ENCODE measurements at regions of chr12 and their contacts with region 1.

Region 1: GRCh38 chr12:85448548-85449139 is 168.6 kb downstream of the ALX1 start:
- DNase-seq: no peak
- H3K4me3 ChIP-seq: no peak overlapping the region
- H3K27ac ChIP-seq: no peak overlapping the region
- H3K27me3 ChIP-seq: peaks cover 0 to 10% (median 0%) of the 10 kb centered on the region in 45 donors
- CTCF ChIP-seq: peak in 55 of 56 donors; percentile 24 to 71 (median 51)

Region 2: GRCh38 chr12:85076688-85077430 is 371.8 kb before region 1 on chr12:
- intact Hi-C with region 1: loop called (anchors 5 to 10 kb)
- DNase-seq: no peak
- H3K4me3 ChIP-seq: no peak overlapping the region
- H3K27ac ChIP-seq: no peak overlapping the region
- H3K27me3 ChIP-seq: no peaks in the 10 kb centered on the region
- CTCF ChIP-seq: peak in 55 of 56 donors; percentile 34 to 77 (median 56)

Measured in dorsolateral prefrontal cortex (tissue), 120 donors.